Activated CD4-positive, alpha-beta T cell treated with anti-CD3 and anti-CD28 coated beads for 36 hours (primary cell): ENCODE measurements at regions of chr22 and their contacts with region 1.

Region 1: DNA sequence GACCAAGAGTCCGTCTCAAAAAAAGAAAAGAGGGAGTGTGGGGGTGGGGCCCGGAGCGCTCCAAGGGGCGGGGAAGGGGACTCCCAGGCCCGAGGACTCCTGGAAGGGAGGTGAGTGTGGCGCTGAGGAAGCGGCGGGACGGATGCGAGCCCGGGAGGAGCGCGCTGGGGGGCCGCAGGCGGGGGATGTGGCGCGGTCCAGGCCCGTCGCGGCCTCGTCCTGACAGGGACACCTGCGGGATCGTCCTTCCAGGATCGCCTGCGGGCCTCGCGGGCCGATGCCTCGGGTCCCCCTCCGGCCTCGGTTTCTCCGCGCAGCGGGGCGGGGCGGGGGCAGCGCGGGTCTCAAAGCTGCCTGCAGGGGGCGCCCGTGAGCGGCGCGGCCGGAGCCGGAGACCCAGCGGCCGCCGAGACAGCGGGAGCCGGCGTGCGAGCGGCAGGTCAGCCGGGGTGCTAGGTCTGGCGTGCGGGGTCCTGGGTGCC is 3.8 kb upstream of the ADORA2A start:
- DNase-seq: peak; percentile 81
- ATAC-seq: peak; percentile 24
- H3K4me3 Mint-ChIP-seq: peak overlapping the region; percentile 94
- H3K27ac Mint-ChIP-seq: no peak overlapping the region
- H3K4me1 Mint-ChIP-seq: peaks cover 25% of the 10 kb centered on the region
- H3K27me3 Mint-ChIP-seq: peaks cover 3% of the 10 kb centered on the region

Region 2: GRCh38 chr22:24189249-24190158 is 234.1 kb before region 1 on chr22:
- CTCF ChIA-PET with region 1: no interaction called
- POLR2A ChIA-PET with region 1: no interaction called
- intact Hi-C with region 1: loop called in 1 of 2 experiments (anchors 10 kb)
- DNase-seq: peak; percentile 74
- ATAC-seq: peak; percentile 92
- H3K4me3 Mint-ChIP-seq: no peak overlapping the region
- H3K27ac Mint-ChIP-seq: no peak overlapping the region
- H3K4me1 Mint-ChIP-seq: no peaks in the 10 kb centered on the region
- H3K27me3 Mint-ChIP-seq: no peaks in the 10 kb centered on the region

Region 3: DNA sequence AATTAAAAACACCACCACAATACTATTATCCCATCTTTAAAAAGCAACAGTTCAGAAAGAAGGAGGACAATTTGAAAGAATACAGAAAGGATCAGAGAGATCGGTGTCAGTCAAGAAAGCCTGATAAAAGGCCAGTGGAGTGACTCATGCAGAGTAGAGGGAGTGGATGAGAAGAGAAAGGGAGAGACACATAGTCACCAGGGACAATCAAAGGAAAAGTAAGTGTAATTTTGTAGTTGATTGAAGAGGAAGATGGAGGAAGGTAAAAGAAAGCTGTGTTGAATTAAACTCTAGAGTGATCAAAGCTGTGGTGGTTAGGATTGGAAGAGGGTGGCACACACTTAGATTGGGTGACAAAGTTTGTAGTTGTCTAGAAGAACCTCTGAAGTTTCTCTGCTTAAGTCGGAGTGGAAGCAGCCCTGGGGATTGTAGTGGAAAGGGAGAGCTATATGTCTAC is 138.8 kb before region 1 on chr22:
- CTCF ChIA-PET with region 1: no interaction called
- POLR2A ChIA-PET with region 1: no interaction called
- intact Hi-C with region 1: no loop called
- DNase-seq: peak; percentile 42
- ATAC-seq: peak; percentile 79
- H3K4me3 Mint-ChIP-seq: peak overlapping the region; percentile 1
- H3K27ac Mint-ChIP-seq: peak overlapping the region; percentile 68
- H3K4me1 Mint-ChIP-seq: peaks cover 57% of the 10 kb centered on the region
- H3K27me3 Mint-ChIP-seq: peaks cover 2% of the 10 kb centered on the region

Region 4: DNA sequence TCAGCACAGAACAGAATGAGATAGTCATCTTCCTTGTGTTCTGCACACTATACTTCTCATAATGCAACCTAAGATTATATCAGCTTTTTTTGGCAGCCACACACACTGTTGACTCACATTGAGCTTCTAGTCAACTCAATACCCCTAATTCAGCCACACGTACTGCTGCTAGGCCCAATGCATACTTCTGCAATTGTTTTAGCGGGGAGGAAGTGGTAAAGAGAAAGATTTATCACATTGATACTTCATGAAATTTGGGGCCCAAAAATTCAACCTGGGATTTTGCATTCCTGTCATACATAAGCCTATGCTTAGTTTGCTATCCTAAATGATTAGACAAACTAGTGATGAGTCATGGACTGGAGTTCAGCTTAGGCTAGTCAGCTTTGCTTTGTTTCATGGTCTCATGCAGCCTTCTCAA is 63.0 kb after region 1 on chr22:
- CTCF ChIA-PET with region 1: no interaction called
- POLR2A ChIA-PET with region 1: interaction called, 3 read pairs
- intact Hi-C with region 1: loop called (anchors 1 kb)
- DNase-seq: peak; percentile 62
- ATAC-seq: peak; percentile 96
- H3K4me3 Mint-ChIP-seq: no peak overlapping the region
- H3K27ac Mint-ChIP-seq: peak overlapping the region; percentile 35
- H3K4me1 Mint-ChIP-seq: peaks cover 26% of the 10 kb centered on the region
- H3K27me3 Mint-ChIP-seq: no peaks in the 10 kb centered on the region

Region 5: GRCh38 chr22:24525416-24526037 is 102.0 kb after region 1 on chr22:
- CTCF ChIA-PET with region 1: interaction called, 12 read pairs
- POLR2A ChIA-PET with region 1: no interaction called
- intact Hi-C with region 1: loop called (anchors 1 kb)
- DNase-seq: peak; percentile 90
- ATAC-seq: peak; percentile 92
- H3K4me3 Mint-ChIP-seq: no peak overlapping the region
- H3K27ac Mint-ChIP-seq: no peak overlapping the region
- H3K4me1 Mint-ChIP-seq: peaks cover 8% of the 10 kb centered on the region
- H3K27me3 Mint-ChIP-seq: no peaks in the 10 kb centered on the region

Region 6: DNA sequence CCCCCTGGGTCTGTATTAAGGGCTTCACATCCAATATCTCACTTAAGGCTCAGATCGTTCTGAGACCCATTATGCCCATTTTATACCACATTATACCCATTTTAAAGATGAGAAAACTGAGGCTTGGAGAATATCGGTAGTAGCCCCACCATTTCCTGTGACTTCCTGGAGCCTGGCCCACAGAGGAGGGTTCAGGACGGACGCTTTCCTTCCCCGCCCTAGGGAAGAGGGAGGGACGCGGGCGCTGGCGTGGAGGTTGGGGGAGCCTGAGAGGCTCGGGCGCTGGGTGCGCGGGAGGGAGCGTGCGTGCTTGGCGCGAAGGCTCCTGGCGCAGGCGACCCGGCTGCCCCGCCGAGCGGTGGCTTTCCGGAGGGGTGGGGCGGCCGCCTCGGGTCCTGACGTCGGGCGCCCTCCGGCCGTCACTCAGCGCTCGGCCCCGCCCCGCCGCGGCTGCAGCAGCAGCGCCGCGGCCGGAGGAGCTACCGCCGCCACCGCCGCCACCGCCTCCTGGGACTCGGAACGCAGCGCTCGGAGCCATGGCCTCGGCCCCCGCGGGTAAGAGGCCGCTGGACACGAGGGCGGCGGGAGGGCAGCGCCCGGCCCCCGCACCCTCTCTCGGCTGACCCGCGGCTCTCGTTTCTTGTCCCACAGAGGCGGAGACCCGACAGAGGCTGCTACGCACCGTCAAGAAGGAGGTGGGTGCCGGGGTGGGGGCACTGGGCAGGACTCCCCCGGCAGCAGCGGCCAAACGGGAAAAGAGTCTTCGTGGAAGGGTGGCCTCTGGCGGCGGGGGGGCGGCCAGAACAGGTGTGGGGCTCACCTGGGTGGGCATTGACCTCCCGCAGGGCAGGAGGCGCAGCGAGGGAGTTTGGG is 382.5 kb after region 1 on chr22 and contains the start of gene SGSM1:
- CTCF ChIA-PET with region 1: no interaction called
- POLR2A ChIA-PET with region 1: no interaction called
- intact Hi-C with region 1: loop called in 1 of 2 experiments (anchors 10 kb)
- DNase-seq: peak; percentile 89
- ATAC-seq: peak; percentile 88
- H3K4me3 Mint-ChIP-seq: peak within 1 kb of the TSS; percentile 52
- H3K27ac Mint-ChIP-seq: peak within 1 kb of the TSS; percentile 27
- H3K4me1 Mint-ChIP-seq: peaks cover 26% of the 10 kb centered on the region
- H3K27me3 Mint-ChIP-seq: peaks cover 2% of the 10 kb centered on the region
- total RNA-seq, gene SGSM1: 0.11 to 0.35 TPM